H1 (cell line): ENCODE measurements at regions of chr6 and their contacts with region 1.

Region 1: GRCh38 chr6:165729307-165729936 is 66.4 kb upstream of the PDE10A start:
- DNase-seq: peak in 1 of 2 experiments; percentile 84
- H3K4me3 ChIP-seq: no peak overlapping the region
- H3K27ac ChIP-seq: no peak overlapping the region
- H3K4me1 ChIP-seq: peaks cover 0 to 3% (median 2%) of the 10 kb centered on the region in 4 experiments; a peak in 3 of 7 replicates
- H3K27me3 ChIP-seq: no peaks in the 10 kb centered on the region
- CTCF ChIP-seq: peak; percentile 51 to 76 (median 62)
- EP300 ChIP-seq: no peak
- POLR2A ChIP-seq: no peak
- RAD21 ChIP-seq: peak; percentile 66 to 77

Region 2: DNA sequence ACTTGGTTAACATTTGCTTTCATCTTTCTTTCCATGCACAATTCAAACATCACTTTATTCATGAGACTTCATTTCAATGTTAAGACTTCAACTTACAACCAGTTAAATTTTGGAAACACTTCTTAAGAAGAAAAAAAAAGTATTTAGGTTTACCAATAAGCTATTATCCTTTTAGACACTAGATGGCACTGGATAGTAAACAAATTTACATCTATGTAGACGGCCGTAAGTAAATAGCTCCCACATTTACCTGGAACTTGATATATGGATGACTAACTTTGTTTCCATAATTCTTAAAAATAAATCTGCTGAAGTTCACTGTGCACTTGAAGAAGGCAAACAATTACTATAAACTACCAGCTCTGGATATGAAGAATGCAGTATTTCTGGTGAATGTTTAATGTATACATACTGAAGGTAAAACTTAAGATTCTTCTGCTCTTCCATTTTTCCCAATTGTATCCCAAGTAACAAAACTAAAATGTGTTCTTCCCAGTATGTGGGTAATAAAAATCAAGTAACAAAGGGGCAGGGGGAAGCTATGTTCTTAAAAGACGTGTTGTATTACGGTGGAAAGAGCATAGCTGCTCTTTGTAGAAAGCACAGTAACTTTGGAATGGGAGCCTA is 289.4 kb before region 1 on chr6:
- CTCF ChIA-PET with region 1: interaction called, 21 read pairs
- POLR2A ChIA-PET with region 1: no interaction called
- DNase-seq: no peak
- H3K4me3 ChIP-seq: no peak overlapping the region
- H3K27ac ChIP-seq: no peak overlapping the region
- H3K4me1 ChIP-seq: no peaks in the 10 kb centered on the region
- H3K27me3 ChIP-seq: no peaks in the 10 kb centered on the region
- CTCF ChIP-seq: peak in 2 of 3 experiments; percentile 27 to 56; a peak in 2 of 4 replicates
- EP300 ChIP-seq: no peak
- POLR2A ChIP-seq: no peak
- RAD21 ChIP-seq: peak; percentile 59 to 72

Region 3: DNA sequence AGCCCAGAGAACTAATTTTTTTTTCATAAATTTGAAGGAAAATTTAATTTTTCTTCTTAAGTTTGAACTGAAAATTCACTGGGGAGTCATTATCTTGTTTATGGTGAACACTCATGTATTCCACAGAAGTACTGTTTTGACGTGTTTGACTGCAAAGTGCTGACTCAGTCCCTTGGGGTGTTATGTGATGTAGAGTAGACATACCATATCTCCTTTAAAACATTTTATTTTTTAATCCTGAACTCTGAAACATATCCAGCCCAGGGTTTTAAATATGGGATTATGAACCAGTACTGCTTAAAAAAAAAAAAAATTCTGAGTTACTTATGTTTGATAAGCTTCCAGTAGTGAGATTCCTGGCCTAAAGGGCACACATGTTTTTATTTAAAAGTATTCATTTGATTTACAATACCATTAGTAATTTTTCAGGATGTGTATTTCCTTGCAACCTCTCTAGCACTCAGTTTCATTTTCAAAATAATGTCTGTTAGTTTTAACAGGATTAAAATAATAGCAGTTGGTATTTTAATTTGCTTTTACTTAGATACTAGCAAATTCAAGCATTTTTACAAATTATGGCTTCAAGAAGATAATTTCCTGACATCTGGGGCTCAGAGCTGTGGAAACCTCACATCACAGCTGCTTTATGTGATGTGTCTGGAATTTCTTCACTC is 15.3 kb after region 1 on chr6:
- CTCF ChIA-PET with region 1: interaction called, 15 read pairs
- POLR2A ChIA-PET with region 1: no interaction called
- DNase-seq: no peak
- H3K4me3 ChIP-seq: no peak overlapping the region
- H3K27ac ChIP-seq: no peak overlapping the region
- H3K4me1 ChIP-seq: no peaks in the 10 kb centered on the region
- H3K27me3 ChIP-seq: no peaks in the 10 kb centered on the region
- CTCF ChIP-seq: no peak
- EP300 ChIP-seq: no peak
- POLR2A ChIP-seq: no peak
- RAD21 ChIP-seq: no peak

Region 4: GRCh38 chr6:165834613-165835259 is 105.3 kb after region 1 on chr6:
- CTCF ChIA-PET with region 1: interaction called, 16 read pairs
- POLR2A ChIA-PET with region 1: no interaction called
- DNase-seq: no peak
- H3K4me3 ChIP-seq: no peak overlapping the region
- H3K27ac ChIP-seq: no peak overlapping the region
- H3K4me1 ChIP-seq: peaks cover 0 to 1% (median 0%) of the 10 kb centered on the region in 4 experiments; a peak in 1 of 7 replicates
- H3K27me3 ChIP-seq: no peaks in the 10 kb centered on the region; a peak in 2 of 7 replicates
- CTCF ChIP-seq: no peak
- EP300 ChIP-seq: no peak
- POLR2A ChIP-seq: no peak
- RAD21 ChIP-seq: no peak

Region 5: DNA sequence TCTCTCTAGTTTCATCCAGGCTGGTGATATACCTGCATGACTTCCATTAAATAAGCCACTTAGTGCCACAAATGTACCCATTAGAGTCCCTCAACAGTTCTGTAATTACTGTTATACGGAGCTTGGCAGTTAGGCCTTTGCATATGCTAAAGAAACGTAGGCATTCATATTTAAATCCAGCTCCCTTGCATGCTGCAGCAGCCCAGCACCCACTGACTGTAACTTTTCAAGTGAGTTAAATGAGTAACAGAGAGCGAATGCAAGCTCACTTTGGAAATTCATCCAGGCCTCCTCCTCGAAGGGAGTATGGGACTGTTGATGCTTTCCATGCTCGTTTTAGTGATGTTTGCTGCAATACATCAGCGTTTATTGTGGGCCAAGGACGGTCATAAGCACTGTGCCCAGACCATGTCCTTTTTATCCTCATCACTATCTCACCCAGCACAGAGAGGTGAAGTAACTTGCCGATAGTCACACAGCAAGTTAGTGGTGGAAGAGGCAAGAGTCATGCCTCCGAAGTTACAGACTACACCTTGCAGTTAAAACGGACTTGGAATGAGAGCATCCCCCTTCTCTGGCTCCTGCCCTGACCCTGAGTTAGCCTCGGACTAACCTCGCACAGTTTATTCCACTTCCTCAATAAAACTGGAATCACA is 113.0 kb after region 1 on chr6:
- CTCF ChIA-PET with region 1: interaction called, 18 read pairs
- POLR2A ChIA-PET with region 1: no interaction called
- DNase-seq: no peak
- H3K4me3 ChIP-seq: peak overlapping the region in 1 of 4 experiments; percentile 33; a peak in 2 of 8 replicates
- H3K27ac ChIP-seq: no peak overlapping the region
- H3K4me1 ChIP-seq: peaks cover 15 to 35% (median 30%) of the 10 kb centered on the region in 4 experiments
- H3K27me3 ChIP-seq: no peaks in the 10 kb centered on the region
- CTCF ChIP-seq: no peak
- EP300 ChIP-seq: no peak
- POLR2A ChIP-seq: no peak
- RAD21 ChIP-seq: no peak

Region 6: GRCh38 chr6:165850434-165851019 is 121.1 kb after region 1 on chr6:
- CTCF ChIA-PET with region 1: interaction called, 92 read pairs
- POLR2A ChIA-PET with region 1: interaction called, 3 read pairs
- DNase-seq: peak in 1 of 2 experiments; percentile 86
- H3K4me3 ChIP-seq: no peak overlapping the region
- H3K27ac ChIP-seq: no peak overlapping the region
- H3K4me1 ChIP-seq: peaks cover 0 to 13% (median 8%) of the 10 kb centered on the region in 4 experiments; a peak in 5 of 7 replicates
- H3K27me3 ChIP-seq: peaks cover 14 to 36% (median 26%) of the 10 kb centered on the region in 4 experiments
- CTCF ChIP-seq: peak; percentile 90 to 96 (median 90)
- EP300 ChIP-seq: no peak
- POLR2A ChIP-seq: no peak
- RAD21 ChIP-seq: peak; percentile 89 to 92